Activated CD4-positive, alpha-beta T cell treated with anti-CD3 and anti-CD28 coated beads, Interleukin-2, amount 10 ng/mL, durations not matched to agents 24 days and 14 days (primary cell): ENCODE measurements at regions of chr7 and their contacts with region 1.

Region 1: GRCh38 chr7:129780257-129780973 is 168.9 kb downstream of the NRF1 start:
- DNase-seq: peak; percentile 87
- H3K4me3 Mint-ChIP-seq: peak overlapping the region; percentile 64
- H3K27ac Mint-ChIP-seq: no peak overlapping the region
- H3K4me1 Mint-ChIP-seq: peaks cover 28% of the 10 kb centered on the region
- H3K27me3 Mint-ChIP-seq: peaks cover 60% of the 10 kb centered on the region

Region 2: DNA sequence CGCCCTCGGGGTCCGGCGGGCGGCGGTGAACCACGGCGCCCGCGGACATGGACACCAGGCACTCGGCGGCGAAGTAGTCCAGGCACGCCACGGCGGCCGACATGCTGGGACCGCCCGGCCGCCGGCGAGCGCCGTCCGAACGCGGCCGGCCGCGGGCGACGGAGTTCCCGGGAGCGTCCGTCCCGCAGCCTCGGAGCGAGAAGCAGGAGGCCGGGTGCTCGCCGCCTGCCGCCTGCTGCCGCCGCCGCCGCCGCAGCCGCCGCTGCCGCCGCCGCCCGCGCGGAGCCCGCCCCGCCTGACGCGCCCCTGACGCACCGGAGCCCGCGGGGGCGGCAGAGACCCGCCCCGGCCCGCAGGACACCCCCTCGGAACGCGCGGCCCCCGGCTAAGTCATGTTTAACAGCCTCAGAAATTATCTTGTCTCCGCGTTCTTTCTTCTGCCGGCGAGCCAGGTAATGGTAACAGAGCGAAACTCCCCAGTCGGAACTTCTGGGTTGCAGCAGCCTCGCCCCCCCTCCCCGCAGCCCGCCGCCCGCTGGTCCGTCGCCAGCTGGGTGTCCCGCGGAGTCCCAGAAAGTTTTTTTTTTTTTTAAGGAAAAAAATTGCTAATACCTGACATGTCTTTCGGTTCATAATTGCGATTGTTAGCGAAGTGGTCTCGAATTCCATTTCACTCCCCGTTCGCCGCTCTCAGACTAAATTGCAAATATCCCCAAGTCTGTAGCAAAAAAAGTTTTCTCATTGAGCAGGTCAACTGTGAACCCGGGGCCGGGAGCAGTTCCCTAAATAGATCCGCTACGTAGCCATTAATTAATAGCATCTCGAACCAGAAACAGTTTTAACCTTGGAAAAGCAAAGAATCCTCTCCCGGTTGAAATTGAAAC is 953.8 kb after region 1 on chr7 and contains the start of gene KLF14:
- intact Hi-C with region 1: loop called (anchors 5 kb)
- DNase-seq: peak; percentile 76
- H3K4me3 Mint-ChIP-seq: peak within 1 kb of the TSS; percentile 87
- H3K27ac Mint-ChIP-seq: peak within 1 kb of the TSS; percentile 11
- H3K4me1 Mint-ChIP-seq: peaks cover 3% of the 10 kb centered on the region
- H3K27me3 Mint-ChIP-seq: peaks cover 70% of the 10 kb centered on the region
- total RNA-seq, gene KLF14: not detected in 2 replicates